Activated naive CD4-positive, alpha-beta T cell treated with anti-CD3 and anti-CD28 coated beads for 36 hours (primary cell): ENCODE measurements at regions of chr4 and their contacts with region 1.

Region 1: GRCh38 chr4:105140684-105141490 is 5.8 kb upstream of the TET2 start:
- DNase-seq: peak; percentile 59
- H3K4me3 Mint-ChIP-seq: no peak overlapping the region
- H3K27ac Mint-ChIP-seq: no peak overlapping the region
- H3K4me1 Mint-ChIP-seq: peaks cover 28% of the 10 kb centered on the region
- H3K27me3 Mint-ChIP-seq: no peaks in the 10 kb centered on the region

Region 2: GRCh38 chr4:104930298-104930697 is 210.6 kb before region 1 on chr4:
- CTCF ChIA-PET with region 1: no interaction called
- intact Hi-C with region 1: loop called (anchors 1 kb)
- DNase-seq: no peak
- H3K4me3 Mint-ChIP-seq: no peak overlapping the region
- H3K27ac Mint-ChIP-seq: no peak overlapping the region
- H3K4me1 Mint-ChIP-seq: peaks cover 25% of the 10 kb centered on the region
- H3K27me3 Mint-ChIP-seq: no peaks in the 10 kb centered on the region

Region 3: DNA sequence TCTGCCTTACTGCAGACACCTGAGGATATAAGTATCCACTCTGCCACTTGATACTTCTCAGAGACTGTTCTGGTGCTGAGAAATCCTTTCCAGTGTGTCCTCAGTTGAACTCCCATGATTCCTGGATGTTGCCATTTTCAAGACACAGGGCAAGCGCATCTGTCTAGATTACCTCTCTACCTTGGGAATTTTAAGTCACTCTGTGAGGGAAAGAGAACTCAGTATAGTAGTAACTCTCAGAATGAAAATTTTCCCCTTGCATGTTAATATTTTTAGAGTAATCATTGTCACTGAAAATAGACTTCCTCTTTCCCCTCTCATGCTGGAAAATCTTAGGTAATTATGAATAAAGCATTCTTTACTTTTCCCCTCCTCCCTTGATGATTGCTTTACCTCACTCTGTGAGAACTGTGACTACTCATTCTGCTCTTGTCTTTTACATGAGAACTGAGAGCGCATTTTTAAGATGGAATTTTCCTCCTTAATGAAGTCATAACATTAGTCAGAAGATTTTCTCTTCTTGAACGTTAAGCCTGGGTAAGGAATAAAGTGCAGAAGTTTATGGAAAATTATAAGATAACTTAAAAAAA is 50.8 kb after region 1 on chr4:
- CTCF ChIA-PET with region 1: interaction called, 3 read pairs
- intact Hi-C with region 1: loop called (anchors 1 kb)
- DNase-seq: no peak
- H3K4me3 Mint-ChIP-seq: no peak overlapping the region
- H3K27ac Mint-ChIP-seq: peak overlapping the region; percentile 87
- H3K4me1 Mint-ChIP-seq: peaks cover 85% of the 10 kb centered on the region
- H3K27me3 Mint-ChIP-seq: no peaks in the 10 kb centered on the region

Region 4: DNA sequence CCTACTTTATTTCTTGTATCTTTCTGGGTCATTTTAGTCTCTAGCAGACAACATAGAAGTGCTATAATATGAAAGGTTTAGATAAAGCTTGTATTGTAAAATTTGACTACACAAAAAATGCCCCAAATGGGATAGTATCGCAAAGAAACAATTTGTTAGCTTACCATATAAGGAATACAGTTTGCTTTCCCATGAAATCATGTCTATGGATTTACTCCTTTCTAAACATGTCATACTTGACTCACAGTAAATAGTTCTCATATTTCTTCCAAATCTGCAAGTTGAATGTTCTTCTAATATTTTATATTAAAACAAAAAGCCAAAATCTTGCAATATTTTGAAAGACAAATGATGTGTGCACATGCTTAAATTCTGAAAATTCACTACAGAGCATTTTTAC is 229.1 kb after region 1 on chr4:
- CTCF ChIA-PET with region 1: no interaction called
- intact Hi-C with region 1: loop called (anchors 5 kb)
- DNase-seq: no peak
- H3K4me3 Mint-ChIP-seq: no peak overlapping the region
- H3K27ac Mint-ChIP-seq: no peak overlapping the region
- H3K4me1 Mint-ChIP-seq: no peaks in the 10 kb centered on the region
- H3K27me3 Mint-ChIP-seq: no peaks in the 10 kb centered on the region

Region 5: GRCh38 chr4:105631818-105632400 is 491.0 kb after region 1 on chr4:
- CTCF ChIA-PET with region 1: no interaction called
- intact Hi-C with region 1: loop called (anchors 5 kb)
- DNase-seq: no peak
- H3K4me3 Mint-ChIP-seq: no peak overlapping the region
- H3K27ac Mint-ChIP-seq: no peak overlapping the region
- H3K4me1 Mint-ChIP-seq: no peaks in the 10 kb centered on the region
- H3K27me3 Mint-ChIP-seq: peaks cover 10% of the 10 kb centered on the region